ENCODE measurements at regions of chr3 and their contacts with region 1.

Region 1: DNA sequence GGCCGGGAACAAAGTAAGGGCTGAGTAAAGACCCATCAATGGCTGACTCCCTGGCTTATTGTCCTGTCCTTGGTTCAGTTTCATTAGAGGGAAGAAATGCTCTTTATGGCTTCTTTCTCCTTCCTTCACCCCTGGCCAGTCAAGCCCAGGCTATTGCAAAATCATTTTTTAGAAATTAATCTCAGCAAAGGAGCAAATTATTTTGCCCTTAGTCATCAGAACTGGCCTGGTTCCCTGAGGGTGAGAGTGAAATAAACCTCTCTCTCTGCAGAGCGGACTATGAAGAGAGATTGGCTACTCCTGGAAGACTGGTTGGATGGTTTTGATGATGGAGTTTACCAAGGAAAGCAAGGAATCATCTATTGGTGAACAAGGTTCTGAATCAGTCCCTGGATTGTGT is 52.7 kb upstream of the OXTR start:
- DNase-seq: no peak
- H3K4me3 ChIP-seq: no peak overlapping the region
- H3K27ac ChIP-seq: no peak overlapping the region
- H3K4me1 ChIP-seq: no peaks in the 10 kb centered on the region
- H3K27me3 ChIP-seq: no peaks in the 10 kb centered on the region
- CTCF ChIP-seq: no peak
- EP300 ChIP-seq: no peak
- POLR2A ChIP-seq: no peak

Region 2: GRCh38 chr3:8848696-8849131 is 26.6 kb after region 1 on chr3:
- in situ Hi-C with region 1: no loop called
- intact Hi-C with region 1: loop called (anchors 1 kb)
- DNase-seq: no peak
- H3K4me3 ChIP-seq: no peak overlapping the region
- H3K27ac ChIP-seq: no peak overlapping the region
- H3K4me1 ChIP-seq: no peaks in the 10 kb centered on the region
- H3K27me3 ChIP-seq: no peaks in the 10 kb centered on the region
- CTCF ChIP-seq: no peak
- EP300 ChIP-seq: no peak
- POLR2A ChIP-seq: no peak